Activated T-helper 2 cell treated with anti-CD3 and anti-CD28 coated beads, Interferon-gamma antibody, Interleukin-2, Interleukin-4, amounts not matched to agents 10 μg/mL and 5 μg/mL and 100 μg/mL, durations not matched to agents 14 hours and 24 hours and 36 hours (primary cell): ENCODE measurements at regions of chr3 and their contacts with region 1.

Region 1: GRCh38 chr3:122793568-122794416 is at the start of gene HSPBAP1:
- DNase-seq: peak; percentile 87
- H3K4me3 Mint-ChIP-seq: peak within 1 kb of the TSS; percentile 88
- H3K27ac Mint-ChIP-seq: peak within 1 kb of the TSS; percentile 77
- H3K4me1 Mint-ChIP-seq: peaks cover 32% of the 10 kb centered on the region
- H3K27me3 Mint-ChIP-seq: peaks cover 3% of the 10 kb centered on the region
- total RNA-seq, gene HSPBAP1: 6.6 and 8.0 TPM in 2 replicates

Region 2: DNA sequence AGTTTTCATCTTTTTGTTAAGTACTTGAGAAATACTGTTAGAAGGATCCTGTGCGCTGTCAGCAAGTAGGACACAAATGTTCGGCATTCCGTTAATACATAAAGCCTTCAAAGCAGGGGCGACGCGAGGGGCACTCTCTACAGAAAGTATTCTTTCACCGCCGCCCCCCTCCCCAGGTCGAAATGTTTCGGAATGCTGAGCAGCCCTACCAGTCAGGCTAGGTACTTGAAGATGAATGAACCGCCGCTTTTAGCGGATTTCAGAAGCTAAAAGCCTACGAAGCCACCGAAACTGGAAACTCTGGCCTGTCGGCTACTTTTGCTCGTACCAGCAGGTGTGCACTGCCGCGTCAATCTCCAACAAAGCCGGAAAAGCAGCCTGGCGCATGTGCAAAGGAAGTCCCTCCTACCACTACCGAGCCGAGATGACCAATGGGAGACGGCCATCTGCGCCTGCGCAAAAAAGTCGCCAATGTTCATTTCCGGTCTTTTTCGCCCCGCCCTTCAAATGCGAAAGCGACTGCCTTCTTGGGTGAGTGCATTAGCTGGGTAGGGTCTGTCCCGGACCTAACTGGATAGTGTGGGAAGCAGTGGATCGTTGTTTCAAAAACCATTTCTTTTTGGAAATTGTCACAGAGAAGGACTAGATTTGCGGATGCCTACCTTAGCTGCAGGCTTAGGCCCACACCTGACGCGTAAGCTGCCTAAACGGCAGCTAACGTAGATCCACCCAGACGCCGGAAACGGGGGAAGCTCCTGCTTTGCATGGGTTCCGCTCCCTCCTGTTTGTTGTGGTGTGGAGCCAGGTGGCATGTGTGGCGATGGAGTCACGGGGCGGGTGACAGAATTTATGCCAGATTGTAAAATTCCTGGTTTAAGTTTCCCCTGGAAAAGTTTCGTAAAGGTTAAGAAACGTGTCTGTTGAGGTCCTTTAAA is 377.8 kb before region 1 on chr3 and contains the start of gene WDR5B:
- intact Hi-C with region 1: loop called (anchors 10 kb)
- DNase-seq: peak; percentile 97
- H3K4me3 Mint-ChIP-seq: peak within 1 kb of the TSS; percentile 93
- H3K27ac Mint-ChIP-seq: peak within 1 kb of the TSS; percentile 95
- H3K4me1 Mint-ChIP-seq: peaks cover 22% of the 10 kb centered on the region
- H3K27me3 Mint-ChIP-seq: no peaks in the 10 kb centered on the region
- total RNA-seq, gene WDR5B: 4.9 and 5.5 TPM in 2 replicates

Region 3: GRCh38 chr3:122564155-122564912 is 229.5 kb before region 1 on chr3 and contains the starts of genes DTX3L and PARP9:
- intact Hi-C with region 1: loop called (anchors 10 kb)
- DNase-seq: peak; percentile 84
- H3K4me3 Mint-ChIP-seq: peak within 1 kb of the TSS; percentile 97
- H3K27ac Mint-ChIP-seq: peak within 1 kb of the TSS; percentile 95
- H3K4me1 Mint-ChIP-seq: peaks cover 65% of the 10 kb centered on the region
- H3K27me3 Mint-ChIP-seq: no peaks in the 10 kb centered on the region
- total RNA-seq, gene DTX3L: 32.4 and 34.3 TPM in 2 replicates
- total RNA-seq, gene PARP9: 29.8 and 31.0 TPM in 2 replicates

Region 4: GRCh38 chr3:122843604-122844003 is 49.8 kb after region 1 on chr3:
- intact Hi-C with region 1: no loop called
- DNase-seq: no peak
- H3K4me3 Mint-ChIP-seq: no peak overlapping the region
- H3K27ac Mint-ChIP-seq: no peak overlapping the region
- H3K4me1 Mint-ChIP-seq: no peaks in the 10 kb centered on the region
- H3K27me3 Mint-ChIP-seq: no peaks in the 10 kb centered on the region

Region 5: DNA sequence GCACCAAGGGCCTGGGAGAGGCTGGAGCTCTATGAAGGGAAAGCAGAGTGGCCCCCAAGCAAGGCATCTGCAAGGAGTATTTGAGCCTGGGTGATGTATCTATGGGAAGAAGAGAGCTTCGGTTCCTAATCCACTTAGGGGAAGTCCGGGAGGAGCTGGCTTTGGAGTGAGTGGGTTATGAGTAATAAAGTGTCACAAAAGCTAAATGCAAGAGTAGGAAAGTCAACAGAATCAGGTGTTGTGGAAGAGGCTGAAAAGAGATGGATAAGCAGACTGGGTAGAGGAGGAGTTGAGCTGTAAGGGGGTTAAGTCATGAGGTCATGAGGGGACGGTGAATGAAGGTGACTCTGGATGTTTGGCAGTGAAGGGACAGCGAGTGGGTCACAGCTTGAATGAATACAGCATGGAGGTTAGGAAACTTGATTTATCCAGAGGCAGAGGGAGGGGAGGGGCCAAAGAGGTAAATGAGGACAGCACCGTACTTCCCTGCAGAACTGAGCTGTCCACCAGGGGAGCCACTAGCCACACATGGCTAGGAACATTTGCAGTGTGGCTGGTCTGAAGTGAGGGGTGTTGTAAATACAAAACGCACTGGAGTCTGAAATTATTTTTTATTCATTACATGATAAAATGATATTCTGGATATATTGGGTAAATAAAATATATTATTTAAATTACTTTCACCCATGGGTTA is 571.8 kb after region 1 on chr3:
- intact Hi-C with region 1: no loop called
- DNase-seq: no peak
- H3K4me3 Mint-ChIP-seq: no peak overlapping the region
- H3K27ac Mint-ChIP-seq: no peak overlapping the region
- H3K4me1 Mint-ChIP-seq: no peaks in the 10 kb centered on the region
- H3K27me3 Mint-ChIP-seq: peaks cover 7% of the 10 kb centered on the region

Region 6: DNA sequence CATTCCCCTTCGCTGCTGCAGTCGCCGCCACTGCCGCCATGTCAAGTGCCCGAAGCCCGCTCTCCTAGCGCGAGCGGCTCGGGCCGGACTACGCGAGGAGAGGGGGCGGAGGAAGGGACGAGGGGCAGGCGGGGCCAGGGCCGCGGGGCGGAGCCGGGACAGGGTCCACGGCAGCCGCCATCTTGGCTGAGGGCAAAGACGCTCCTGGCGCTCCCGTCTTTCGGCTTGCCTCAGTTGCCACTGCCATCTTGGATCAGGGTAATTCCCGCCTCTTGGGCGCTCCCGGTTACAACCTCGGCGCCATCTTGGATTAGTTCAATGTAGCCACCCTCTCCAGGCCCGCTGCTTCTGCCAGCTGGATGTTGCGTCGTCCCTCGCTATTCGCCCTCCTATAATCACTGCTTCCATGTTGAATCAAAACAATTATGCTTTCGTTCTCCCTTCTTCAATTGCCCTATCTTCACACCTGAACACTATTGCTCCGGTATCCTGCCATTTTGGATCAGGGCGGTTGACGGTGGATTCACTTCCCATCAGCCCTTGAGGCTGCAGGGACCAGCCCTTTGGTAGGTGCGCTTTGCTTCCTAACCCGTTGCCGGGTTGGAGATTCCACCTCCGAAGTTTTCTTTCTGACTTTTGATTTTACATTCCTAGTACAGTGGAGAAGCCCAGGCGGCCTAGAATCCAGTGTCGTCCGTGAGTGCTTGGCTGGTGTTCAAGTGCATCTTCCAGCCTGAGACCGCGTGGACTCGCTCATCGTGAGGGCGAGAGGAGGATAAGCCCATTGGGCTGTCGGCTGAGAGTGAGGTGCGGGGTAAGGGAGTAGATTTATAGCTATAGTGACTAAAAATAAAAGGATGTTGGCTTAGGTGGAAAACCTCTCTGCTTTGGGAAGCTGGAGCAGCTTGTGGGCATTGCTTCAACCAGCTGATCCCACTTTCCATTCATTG is 791.5 kb after region 1 on chr3 and contains the start of gene HACD2:
- intact Hi-C with region 1: loop called (anchors 10 kb)
- DNase-seq: peak; percentile 92
- H3K4me3 Mint-ChIP-seq: no peak within 1 kb of the TSS
- H3K27ac Mint-ChIP-seq: peak within 1 kb of the TSS; percentile 72
- H3K4me1 Mint-ChIP-seq: peaks cover 20% of the 10 kb centered on the region
- H3K27me3 Mint-ChIP-seq: no peaks in the 10 kb centered on the region
- total RNA-seq, gene HACD2: 29.5 and 32.5 TPM in 2 replicates